Activated naive CD4-positive, alpha-beta T cell treated with anti-CD3 and anti-CD28 coated beads for 36 hours (primary cell): ENCODE measurements at regions of chr6 and their contacts with region 1.

Region 1: DNA sequence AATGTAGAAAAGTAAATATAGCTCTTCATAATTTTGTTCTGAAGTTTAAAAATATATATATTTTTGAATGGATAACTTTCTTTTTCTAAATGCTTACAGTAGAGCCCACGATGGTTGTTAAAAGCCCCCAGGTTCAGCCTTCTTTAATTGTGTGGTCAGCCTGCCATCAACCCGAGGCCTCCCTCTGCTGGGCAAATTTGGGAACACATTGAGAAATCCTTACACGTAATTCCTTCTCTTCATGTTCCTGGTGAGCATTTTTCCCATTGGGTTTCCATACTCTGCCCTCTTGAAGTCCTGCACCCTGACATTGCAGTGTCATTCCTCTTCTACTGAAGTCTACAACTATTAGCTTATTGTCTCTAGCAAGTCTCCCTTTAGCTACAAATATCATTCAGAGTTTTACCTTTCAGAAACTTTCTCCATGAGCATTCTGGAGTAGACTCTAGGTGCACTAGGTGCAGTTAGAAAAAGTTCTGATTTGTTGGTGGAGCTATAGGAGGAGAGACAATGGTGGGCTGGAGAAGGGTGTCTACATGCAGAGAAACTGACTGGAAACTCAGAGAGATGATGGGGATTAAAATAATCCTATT is 40.6 kb downstream of the TRIM38 start:
- DNase-seq: peak; percentile 63
- H3K4me3 Mint-ChIP-seq: no peak overlapping the region
- H3K27ac Mint-ChIP-seq: no peak overlapping the region
- H3K4me1 Mint-ChIP-seq: peaks cover 3% of the 10 kb centered on the region
- H3K27me3 Mint-ChIP-seq: no peaks in the 10 kb centered on the region

Region 2: DNA sequence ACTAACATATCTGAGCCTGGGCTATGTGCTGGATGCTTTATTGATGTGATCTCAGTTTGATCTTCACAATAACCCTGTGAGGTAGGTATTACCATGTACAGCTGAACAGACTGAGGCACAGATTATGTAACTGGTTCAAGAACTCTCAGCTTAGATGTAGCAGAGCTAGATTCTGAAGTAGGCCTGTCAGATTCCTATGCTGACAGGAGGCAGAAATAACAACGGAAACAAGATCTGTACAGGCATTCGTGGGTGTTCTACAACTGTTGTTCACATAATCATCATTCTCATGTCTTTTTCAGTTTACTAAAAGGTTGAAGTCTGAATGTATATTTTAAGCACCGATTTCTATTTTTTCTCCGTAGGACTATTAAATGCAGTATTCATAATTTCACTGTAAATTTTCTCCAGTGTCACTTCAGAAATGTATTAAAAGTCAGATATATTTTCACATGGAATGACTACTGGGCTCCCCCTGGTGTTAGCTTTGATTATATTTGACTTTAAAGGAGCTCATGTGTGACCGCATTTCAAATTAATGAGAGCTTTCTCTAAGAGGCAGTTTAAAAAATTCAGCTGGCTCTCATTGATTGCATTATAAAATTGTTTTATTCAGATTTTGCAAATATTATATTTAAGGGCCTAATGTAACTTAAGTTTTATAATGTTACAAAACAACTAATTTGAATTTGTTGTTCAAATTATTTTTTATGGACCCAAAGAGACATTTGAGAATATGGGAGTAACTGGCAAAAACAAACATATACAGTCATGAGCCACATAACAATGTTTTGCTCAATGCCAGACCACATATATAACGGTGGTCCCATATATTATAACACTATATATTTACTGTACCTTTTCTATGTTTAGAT is 285.1 kb before region 1 on chr6:
- CTCF ChIA-PET with region 1: interaction called, 29 read pairs
- intact Hi-C with region 1: loop called (anchors 1 kb)
- DNase-seq: no peak
- H3K4me3 Mint-ChIP-seq: no peak overlapping the region
- H3K27ac Mint-ChIP-seq: no peak overlapping the region
- H3K4me1 Mint-ChIP-seq: no peaks in the 10 kb centered on the region
- H3K27me3 Mint-ChIP-seq: peaks cover 9% of the 10 kb centered on the region

Region 3: GRCh38 chr6:26020329-26021000 is 17.3 kb after region 1 on chr6:
- CTCF ChIA-PET with region 1: interaction called, 83 read pairs
- intact Hi-C with region 1: no loop called
- DNase-seq: peak; percentile 87
- H3K4me3 Mint-ChIP-seq: peak overlapping the region; percentile 96
- H3K27ac Mint-ChIP-seq: peak overlapping the region; percentile 100
- H3K4me1 Mint-ChIP-seq: peaks cover 26% of the 10 kb centered on the region
- H3K27me3 Mint-ChIP-seq: no peaks in the 10 kb centered on the region

Region 4: DNA sequence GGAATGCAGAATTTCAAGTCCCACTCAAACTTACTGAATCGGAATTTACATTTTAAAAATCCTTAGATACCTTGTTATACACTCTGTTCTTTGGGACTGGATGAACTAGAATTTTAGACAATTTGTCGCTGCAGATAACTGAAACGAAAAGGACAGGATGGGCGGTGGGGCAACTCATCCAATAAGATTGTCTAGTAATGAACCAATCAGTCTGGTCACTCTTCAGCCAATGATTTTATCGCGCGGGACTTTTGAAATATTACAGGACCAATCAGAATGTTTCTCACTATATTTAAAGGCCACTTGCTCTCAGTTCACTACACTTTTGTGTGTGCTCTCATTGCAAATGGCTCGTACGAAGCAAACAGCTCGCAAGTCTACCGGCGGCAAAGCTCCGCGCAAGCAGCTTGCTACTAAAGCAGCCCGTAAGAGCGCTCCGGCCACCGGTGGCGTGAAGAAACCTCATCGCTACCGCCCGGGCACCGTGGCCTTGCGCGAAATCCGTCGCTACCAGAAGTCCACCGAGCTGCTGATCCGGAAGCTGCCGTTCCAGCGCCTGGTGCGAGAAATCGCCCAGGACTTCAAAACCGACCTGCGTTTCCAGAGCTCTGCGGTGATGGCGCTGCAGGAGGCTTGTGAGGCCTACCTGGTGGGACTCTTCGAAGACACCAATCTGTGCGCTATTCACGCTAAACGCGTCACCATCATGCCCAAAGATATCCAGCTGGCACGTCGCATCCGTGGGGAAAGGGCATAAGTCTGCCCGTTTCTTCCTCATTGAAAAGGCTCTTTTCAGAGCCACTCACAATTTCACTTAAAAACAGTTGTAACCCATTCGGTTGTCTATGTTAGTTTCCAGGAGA is 42.1 kb after region 1 on chr6:
- CTCF ChIA-PET with region 1: no interaction called
- intact Hi-C with region 1: no loop called
- DNase-seq: peak; percentile 84
- H3K4me3 Mint-ChIP-seq: peak overlapping the region; percentile 83
- H3K27ac Mint-ChIP-seq: peak overlapping the region; percentile 99
- H3K4me1 Mint-ChIP-seq: peaks cover 13% of the 10 kb centered on the region
- H3K27me3 Mint-ChIP-seq: no peaks in the 10 kb centered on the region

Region 5: DNA sequence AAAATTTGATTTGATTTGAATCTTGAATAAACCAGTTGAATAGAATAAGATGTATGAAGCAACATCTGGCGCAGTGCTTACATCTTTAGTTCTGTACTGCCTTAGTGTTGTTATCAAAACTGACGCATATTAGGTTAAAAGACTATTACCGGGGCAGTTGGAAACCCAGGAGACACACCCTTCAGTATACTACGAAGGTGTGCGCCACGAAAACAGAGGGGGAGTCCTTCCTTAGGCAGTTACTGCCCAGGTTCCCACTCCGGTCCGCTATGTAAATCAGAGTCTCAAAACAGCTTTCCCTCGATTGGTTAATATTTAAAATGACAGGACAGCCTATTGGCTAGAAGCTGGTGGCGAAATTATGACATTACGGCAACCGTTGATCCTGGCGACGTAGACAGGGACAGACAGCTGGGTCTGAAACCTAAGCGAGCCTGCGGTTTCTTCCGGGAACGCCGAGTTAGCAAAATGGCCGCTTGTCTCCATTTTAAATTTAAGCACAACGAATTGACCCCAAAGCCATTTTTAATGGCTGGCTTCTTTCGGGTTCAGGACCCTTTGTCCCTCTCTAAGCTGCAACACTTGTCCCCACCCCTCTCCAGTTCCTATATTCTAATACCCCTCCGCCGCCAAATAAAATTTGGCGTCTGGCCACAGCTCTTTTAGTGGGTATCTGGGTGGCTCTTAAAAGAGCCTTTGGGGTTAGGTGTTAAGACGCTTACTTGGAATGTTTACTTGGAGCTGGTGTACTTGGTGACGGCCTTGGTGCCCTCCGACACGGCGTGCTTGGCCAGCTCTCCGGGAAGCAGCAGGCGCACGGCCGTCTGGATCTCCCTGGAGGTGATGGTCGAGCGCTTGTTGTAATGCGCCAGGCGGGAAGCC is 119.8 kb after region 1 on chr6:
- CTCF ChIA-PET with region 1: no interaction called
- intact Hi-C with region 1: no loop called
- DNase-seq: peak; percentile 98
- H3K4me3 Mint-ChIP-seq: peak overlapping the region; percentile 97
- H3K27ac Mint-ChIP-seq: peak overlapping the region; percentile 99
- H3K4me1 Mint-ChIP-seq: peaks cover 36% of the 10 kb centered on the region
- H3K27me3 Mint-ChIP-seq: peaks cover 6% of the 10 kb centered on the region